ENCODE measurements at regions of chr9 and their contacts with region 1.

Region 1: GRCh38 chr9:114718801-114719221 is 36.8 kb upstream of the TEX48 start:
- DNase-seq: peak; percentile 65 to 88 (median 77)
- H3K4me3 ChIP-seq: peak overlapping the region in 1 of 2 donors; percentile 15
- H3K4me3 Mint-ChIP-seq: peak overlapping the region in 7 of 8 donors; percentile 53 to 82 (median 61)
- H3K27ac ChIP-seq: peak overlapping the region; percentile 46
- H3K27ac Mint-ChIP-seq: peak overlapping the region; percentile 83 to 95 (median 93)
- H3K4me1 ChIP-seq: peaks cover 47% of the 10 kb centered on the region
- H3K4me1 Mint-ChIP-seq: peaks cover 38 to 57% (median 45%) of the 10 kb centered on the region in 4 donors
- H3K27me3 ChIP-seq: no peaks in the 10 kb centered on the region
- H3K27me3 Mint-ChIP-seq: no peaks in the 10 kb centered on the region

Region 2: GRCh38 chr9:114691046-114691955 is 27.5 kb before region 1 on chr9:
- CTCF ChIA-PET with region 1: no interaction called
- POLR2A ChIA-PET with region 1: interaction called, 11 read pairs
- intact Hi-C with region 1: loop called (anchors 2 kb)
- DNase-seq: peak; percentile 64 to 86 (median 75)
- H3K4me3 ChIP-seq: peak overlapping the region; percentile 4 to 46
- H3K4me3 Mint-ChIP-seq: peak overlapping the region; percentile 40 to 77 (median 72)
- H3K27ac ChIP-seq: peak overlapping the region; percentile 54
- H3K27ac Mint-ChIP-seq: peak overlapping the region; percentile 65 to 96 (median 93)
- H3K4me1 ChIP-seq: peaks cover 41% of the 10 kb centered on the region
- H3K4me1 Mint-ChIP-seq: peaks cover 28 to 45% (median 31%) of the 10 kb centered on the region in 4 donors
- H3K27me3 ChIP-seq: no peaks in the 10 kb centered on the region
- H3K27me3 Mint-ChIP-seq: no peaks in the 10 kb centered on the region

Region 3: GRCh38 chr9:114696814-114697544 is 21.8 kb before region 1 on chr9:
- CTCF ChIA-PET with region 1: no interaction called
- POLR2A ChIA-PET with region 1: interaction called, 8 read pairs
- intact Hi-C with region 1: loop called (anchors 2 kb)
- DNase-seq: peak in 3 of 5 donors; percentile 5 to 59 (median 16)
- H3K4me3 ChIP-seq: no peak overlapping the region
- H3K4me3 Mint-ChIP-seq: peak overlapping the region in 7 of 8 donors; percentile 63 to 84 (median 70)
- H3K27ac ChIP-seq: no peak overlapping the region
- H3K27ac Mint-ChIP-seq: peak overlapping the region; percentile 51 to 93 (median 74)
- H3K4me1 ChIP-seq: peaks cover 33% of the 10 kb centered on the region
- H3K4me1 Mint-ChIP-seq: peaks cover 27 to 49% (median 30%) of the 10 kb centered on the region in 4 donors
- H3K27me3 ChIP-seq: no peaks in the 10 kb centered on the region
- H3K27me3 Mint-ChIP-seq: no peaks in the 10 kb centered on the region

Region 4: DNA sequence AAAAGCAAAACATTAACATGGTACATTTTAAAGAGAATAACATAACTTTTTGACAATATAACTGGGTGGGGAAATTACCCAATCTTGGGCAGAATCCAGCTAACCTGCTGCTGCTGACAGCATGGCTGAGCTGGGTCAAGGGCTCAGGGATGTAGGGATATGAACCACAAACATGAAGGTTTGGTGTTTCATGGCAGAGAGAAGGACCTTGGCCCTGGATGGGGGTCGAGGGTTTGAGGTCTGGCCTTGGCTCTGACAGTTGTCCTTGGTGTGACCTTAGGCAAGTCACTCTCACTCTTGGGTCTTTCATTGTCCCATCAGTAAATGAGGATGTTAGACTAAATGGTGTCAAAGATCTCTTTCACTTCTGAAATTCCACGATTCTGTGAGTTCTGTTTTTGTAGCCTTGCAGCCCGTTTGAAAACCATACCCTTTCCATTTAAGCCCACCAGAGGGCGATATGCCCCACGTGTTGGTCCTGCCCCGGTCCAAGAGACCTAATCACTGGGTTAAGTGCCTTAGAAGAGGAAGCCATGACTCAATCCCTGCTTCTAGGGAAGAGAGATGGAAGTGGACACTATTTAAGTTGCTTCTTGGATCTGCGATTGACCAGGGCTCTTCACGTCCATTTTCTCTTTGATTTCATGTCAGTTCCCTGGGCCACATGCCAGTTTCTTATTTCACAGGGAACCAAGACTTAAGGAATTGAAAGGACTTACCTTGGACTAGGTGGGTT is 19.9 kb after region 1 on chr9:
- CTCF ChIA-PET with region 1: interaction called, 11 read pairs
- POLR2A ChIA-PET with region 1: interaction called, 11 read pairs
- intact Hi-C with region 1: loop called (anchors 2 kb)
- DNase-seq: peak; percentile 73 to 75 (median 74)
- H3K4me3 ChIP-seq: no peak overlapping the region
- H3K4me3 Mint-ChIP-seq: peak overlapping the region in 3 of 8 donors; percentile 16 to 64 (median 36)
- H3K27ac ChIP-seq: no peak overlapping the region
- H3K27ac Mint-ChIP-seq: peak overlapping the region; percentile 67 to 95 (median 91)
- H3K4me1 ChIP-seq: peaks cover 44% of the 10 kb centered on the region
- H3K4me1 Mint-ChIP-seq: peaks cover 34 to 54% (median 43%) of the 10 kb centered on the region in 4 donors
- H3K27me3 ChIP-seq: no peaks in the 10 kb centered on the region
- H3K27me3 Mint-ChIP-seq: no peaks in the 10 kb centered on the region

Measured in CD4-positive, alpha-beta memory T cell (primary cell).